ENCODE measurements at regions of chr11 and their contacts with region 1.

Region 1: DNA sequence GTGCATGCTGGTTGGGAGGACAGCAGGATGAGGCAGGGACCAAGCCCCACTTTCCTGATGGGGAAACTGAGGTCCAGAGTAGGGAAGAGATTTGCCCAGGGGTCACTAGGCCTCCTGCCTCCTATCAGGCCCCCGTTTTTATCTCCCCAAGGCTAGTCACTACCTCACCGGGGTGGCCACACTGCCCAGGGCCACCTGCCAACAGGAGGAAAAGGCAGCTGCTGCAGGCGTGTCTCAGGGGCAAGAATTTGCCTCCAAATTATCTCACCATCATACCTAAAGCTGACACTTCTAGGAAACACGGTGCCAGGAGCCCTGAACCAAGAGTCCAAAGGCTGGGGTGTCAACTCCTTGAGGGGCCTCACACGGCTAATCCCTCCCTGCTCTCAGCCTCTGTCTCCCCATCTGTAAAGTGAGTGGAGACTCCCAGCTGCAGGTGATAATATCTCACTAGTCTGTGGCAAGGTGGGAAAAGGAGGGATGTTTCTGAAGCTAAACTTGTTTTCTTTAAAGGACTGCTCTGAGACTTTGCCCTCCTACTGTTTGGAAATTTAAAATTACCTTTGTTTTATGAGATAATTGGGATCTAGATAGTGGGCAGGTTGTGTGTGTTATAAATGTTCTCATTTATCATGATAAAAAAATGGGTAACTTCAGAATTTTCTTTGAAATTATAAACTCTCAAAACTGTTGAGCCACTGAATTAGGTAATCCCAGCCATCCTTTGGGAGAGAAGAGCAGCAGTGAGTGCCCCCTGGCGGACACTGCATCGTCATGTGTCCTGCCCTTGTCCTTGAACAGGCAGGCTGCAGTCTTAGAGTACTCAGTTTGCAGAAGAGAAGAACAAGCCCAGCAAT is 60.0 kb downstream of the MYO7A start:
- DNase-seq: peak; percentile 74 to 94
- H3K4me3 ChIP-seq: no peak overlapping the region
- CTCF ChIP-seq: peak in 1 of 3 donors; percentile 68
- POLR2A ChIP-seq: no peak

Region 2: GRCh38 chr11:77127232-77127911 is 60.6 kb before region 1 on chr11:
- intact Hi-C with region 1: loop called (anchors 5 kb)
- DNase-seq: peak in 1 of 2 donors; percentile 90
- H3K4me3 ChIP-seq: no peak overlapping the region
- CTCF ChIP-seq: peak in 1 of 3 donors; percentile 92
- POLR2A ChIP-seq: no peak

Region 3: GRCh38 chr11:77167111-77167626 is 20.8 kb before region 1 on chr11:
- intact Hi-C with region 1: no loop called
- DNase-seq: no peak
- H3K4me3 ChIP-seq: no peak overlapping the region
- CTCF ChIP-seq: no peak
- POLR2A ChIP-seq: no peak

Region 4: DNA sequence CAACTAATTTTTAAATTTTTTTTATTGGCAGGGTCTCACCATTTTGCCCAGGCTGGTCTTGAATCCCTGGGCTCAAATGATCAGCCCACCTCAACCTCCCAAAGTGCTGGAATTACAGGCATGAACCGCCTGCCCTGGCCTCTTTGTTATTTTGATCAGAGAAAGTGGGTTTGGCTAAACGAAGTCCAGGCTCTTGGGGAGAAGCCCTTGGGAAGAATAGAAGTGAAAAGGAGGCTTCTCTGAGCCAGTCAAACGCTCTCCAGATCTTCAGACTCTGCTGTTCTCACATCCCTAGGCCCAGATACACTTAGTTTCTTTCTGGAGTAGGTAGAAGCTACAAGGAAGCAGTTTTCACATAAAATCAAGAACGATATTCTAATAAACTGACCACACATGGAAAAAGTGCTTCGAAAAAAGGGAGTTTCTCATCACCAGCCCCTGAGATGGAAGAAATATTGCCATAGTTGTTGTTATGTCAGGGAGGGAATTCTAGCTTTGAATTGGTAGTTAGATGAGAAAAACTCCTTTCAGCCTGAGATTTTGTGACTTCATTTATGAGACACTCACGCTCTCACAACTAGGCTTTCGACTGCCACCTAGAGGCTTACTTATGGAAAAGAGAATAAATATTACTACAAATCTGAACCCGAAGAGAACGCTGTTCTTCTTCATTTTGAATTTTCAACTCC is 360.0 kb after region 1 on chr11:
- intact Hi-C with region 1: loop called (anchors 5 kb)
- DNase-seq: peak in 1 of 2 donors; percentile 18
- H3K4me3 ChIP-seq: no peak overlapping the region
- CTCF ChIP-seq: no peak
- POLR2A ChIP-seq: no peak

Region 5: DNA sequence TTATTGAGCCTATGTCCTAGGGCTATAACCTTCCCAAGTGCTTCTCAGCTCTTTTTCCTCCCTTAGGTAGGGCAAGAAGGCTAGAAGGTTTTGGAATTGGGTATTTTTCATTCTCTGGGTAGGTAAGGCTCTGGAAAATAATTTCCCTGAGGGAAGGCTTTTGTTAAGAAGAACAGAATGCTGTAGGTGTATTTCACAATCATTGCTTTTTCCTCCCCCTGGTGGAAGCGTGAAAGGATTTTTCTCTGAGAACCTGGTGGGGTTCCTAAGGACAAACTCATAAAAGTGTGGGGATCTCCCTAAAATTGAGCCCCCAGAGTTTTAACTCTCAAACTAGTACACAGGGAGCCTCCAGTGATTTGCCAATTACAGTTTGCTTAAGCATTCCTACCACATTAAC is 1427.7 kb after region 1 on chr11:
- intact Hi-C with region 1: no loop called
- DNase-seq: no peak
- H3K4me3 ChIP-seq: no peak overlapping the region
- CTCF ChIP-seq: no peak
- POLR2A ChIP-seq: no peak